CD8-positive, alpha-beta memory T cell (primary cell): ENCODE measurements at regions of chr7 and their contacts with region 1.

Region 1: GRCh38 chr7:5237286-5237685 is 45.5 kb upstream of the SLC29A4 start:
- DNase-seq: no peak
- H3K4me3 ChIP-seq: no peak overlapping the region
- H3K4me3 Mint-ChIP-seq: no peak overlapping the region
- H3K27ac ChIP-seq: no peak overlapping the region
- H3K27ac Mint-ChIP-seq: no peak overlapping the region
- H3K4me1 ChIP-seq: peaks cover 7% of the 10 kb centered on the region
- H3K4me1 Mint-ChIP-seq: peaks cover 7 to 14% (median 14%) of the 10 kb centered on the region in 3 donors
- H3K27me3 ChIP-seq: no peaks in the 10 kb centered on the region
- H3K27me3 Mint-ChIP-seq: peaks cover 8 to 29% of the 10 kb centered on the region in 2 donors

Region 2: DNA sequence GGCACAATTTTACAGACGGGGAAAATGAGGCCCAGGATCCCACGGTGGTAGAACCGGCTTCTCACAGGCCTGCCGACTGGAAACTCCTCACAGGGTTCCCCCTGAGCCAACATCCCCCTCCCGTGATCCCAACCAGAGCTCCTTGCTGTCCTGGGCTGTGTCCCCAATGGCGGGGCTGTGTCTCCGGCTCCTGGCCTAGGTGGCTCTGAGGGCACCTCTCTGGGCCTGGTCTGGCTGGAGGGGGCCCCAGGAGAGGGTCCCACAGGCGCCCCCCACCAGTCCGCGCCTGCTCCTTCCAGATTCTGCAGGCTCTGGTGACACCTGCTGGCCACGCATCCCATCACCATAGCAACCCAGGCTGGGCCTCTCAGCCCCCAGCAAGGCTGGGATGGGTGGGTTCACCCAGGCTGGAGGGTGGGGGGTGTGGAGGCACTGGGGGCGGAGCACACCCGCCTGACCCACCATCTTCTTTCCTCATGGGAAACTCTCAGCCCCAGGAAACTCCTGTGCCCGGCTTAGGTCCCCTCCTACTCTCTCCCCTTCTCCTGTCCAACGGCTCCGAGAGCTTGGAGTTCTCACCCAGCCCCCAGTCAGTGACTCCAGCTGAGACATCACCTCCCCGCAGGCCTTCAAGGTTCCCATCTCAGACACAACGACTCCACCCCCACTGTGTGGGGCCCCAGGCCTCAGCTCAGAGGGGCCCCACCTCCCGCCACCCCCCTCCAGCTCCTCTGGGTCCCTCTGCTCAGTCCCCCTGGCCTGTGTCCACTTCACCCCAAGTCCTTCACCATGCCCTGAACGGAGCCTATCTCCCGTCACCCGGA is 213.5 kb after region 1 on chr7:
- CTCF ChIA-PET with region 1: interaction called, 26 read pairs
- POLR2A ChIA-PET with region 1: no interaction called
- DNase-seq: peak in 3 of 5 donors; percentile 27 to 65 (median 47)
- H3K4me3 ChIP-seq: no peak overlapping the region
- H3K4me3 Mint-ChIP-seq: no peak overlapping the region
- H3K27ac ChIP-seq: no peak overlapping the region
- H3K27ac Mint-ChIP-seq: peak overlapping the region in 1 of 8 donors; percentile 88
- H3K4me1 ChIP-seq: no peaks in the 10 kb centered on the region
- H3K4me1 Mint-ChIP-seq: no peaks in the 10 kb centered on the region
- H3K27me3 ChIP-seq: no peaks in the 10 kb centered on the region
- H3K27me3 Mint-ChIP-seq: peaks cover 0 to 2% of the 10 kb centered on the region in 2 donors

Region 3: GRCh38 chr7:5519515-5519928 is 282.2 kb after region 1 on chr7:
- CTCF ChIA-PET with region 1: no interaction called
- POLR2A ChIA-PET with region 1: no interaction called
- DNase-seq: no peak
- H3K4me3 ChIP-seq: no peak overlapping the region
- H3K4me3 Mint-ChIP-seq: no peak overlapping the region
- H3K27ac ChIP-seq: no peak overlapping the region
- H3K27ac Mint-ChIP-seq: peak overlapping the region in 1 of 8 donors; percentile 26
- H3K4me1 ChIP-seq: peaks cover 1% of the 10 kb centered on the region
- H3K4me1 Mint-ChIP-seq: peaks cover 3 to 10% (median 4%) of the 10 kb centered on the region in 3 donors
- H3K27me3 ChIP-seq: no peaks in the 10 kb centered on the region
- H3K27me3 Mint-ChIP-seq: no peaks in the 10 kb centered on the region